PC-9 (cell line): ENCODE measurements at regions of chr3 and their contacts with region 1.

Region 1: DNA sequence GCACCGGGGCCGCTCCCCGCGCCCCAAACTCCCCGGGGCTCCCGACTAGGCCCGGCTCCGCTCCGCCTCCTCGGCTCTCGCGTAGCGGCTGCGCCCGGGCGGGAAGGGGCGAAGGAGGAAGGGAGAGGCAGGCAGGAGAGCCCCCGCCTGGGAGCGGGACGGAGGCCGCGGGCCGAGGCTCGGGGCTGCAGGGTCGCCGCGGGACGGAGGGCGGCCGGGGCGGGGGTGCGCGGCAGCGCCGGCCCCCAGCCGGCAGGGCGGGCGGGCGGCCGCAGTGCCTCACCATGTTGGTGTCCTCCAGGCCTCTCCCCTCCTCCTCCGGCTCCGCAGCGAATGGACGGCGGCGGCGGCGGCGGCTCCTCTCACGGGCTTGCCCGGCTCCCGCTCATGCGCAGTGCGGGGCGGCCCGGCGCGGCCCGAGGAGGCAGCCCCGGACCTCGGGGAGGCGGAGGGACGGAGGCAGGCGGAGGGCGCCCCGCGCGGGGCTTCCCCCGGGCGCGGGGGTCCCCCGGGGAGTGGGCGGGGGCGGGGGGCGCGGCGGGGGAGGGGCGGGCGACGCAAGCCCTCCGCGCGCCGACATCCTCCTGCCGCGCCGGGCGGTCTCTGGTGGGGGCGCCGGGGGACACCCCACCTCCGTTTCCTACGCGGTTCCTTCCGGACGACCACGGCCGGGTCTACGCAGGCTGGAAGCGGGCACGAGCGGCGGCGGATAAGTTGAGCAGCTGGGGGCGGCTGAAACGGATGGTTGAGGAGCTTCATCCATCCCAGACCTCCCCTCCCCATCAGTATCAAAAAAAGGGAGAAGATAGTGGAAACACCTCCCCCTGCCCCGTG is at the start of gene DCUN1D1:
- DNase-seq: peak; percentile 79 to 97
- H3K4me3 ChIP-seq: peak within 1 kb of the TSS; percentile 68
- H3K27ac ChIP-seq: no peak within 1 kb of the TSS
- H3K4me1 ChIP-seq: peaks cover 20% of the 10 kb centered on the region
- H3K27me3 ChIP-seq: no peaks in the 10 kb centered on the region
- CTCF ChIP-seq: no peak
- total RNA-seq, gene DCUN1D1: 80.3 and 93.5 TPM in 2 replicates

Region 2: DNA sequence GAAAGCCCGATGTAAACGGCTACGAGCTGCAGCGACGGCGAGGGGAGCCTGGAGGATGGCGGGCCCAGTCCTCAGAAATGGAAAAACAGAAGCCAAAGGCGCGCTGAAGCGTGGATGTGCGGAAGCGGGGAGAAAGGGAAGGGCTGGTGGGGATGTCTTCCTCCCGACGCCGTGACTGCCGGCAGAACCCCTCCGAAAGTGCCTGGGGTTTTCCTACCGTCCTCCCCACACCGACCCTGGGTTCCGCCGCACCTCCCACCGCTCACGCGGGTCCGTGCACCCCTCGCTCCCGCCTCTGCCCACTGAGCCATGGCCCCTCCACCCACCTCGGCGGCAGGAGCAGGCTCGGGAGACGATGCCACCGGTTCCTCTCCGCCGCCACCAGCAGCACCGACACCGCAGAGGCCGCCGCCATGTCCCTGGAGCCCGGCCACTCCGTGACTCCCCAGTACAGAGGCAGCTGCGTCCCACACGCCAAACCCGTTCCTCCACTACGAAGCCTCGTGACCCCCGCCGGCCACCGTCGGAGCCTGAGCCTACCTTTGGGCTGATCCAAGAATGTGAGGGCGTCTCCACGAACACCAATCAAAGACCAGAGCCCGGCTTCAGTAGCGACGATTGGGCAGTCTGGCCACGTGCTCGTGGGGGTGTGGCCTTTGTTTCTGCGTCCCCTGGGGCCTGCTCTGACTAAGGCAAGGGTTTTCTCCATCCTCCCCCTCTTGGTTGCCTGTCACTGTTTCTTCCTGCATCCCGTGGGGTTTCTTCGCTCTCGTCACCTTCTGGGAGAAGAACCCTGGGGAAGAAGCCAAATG is 118.8 kb after region 1 on chr3 and contains the start of gene MCCC1:
- CTCF ChIA-PET with region 1: no interaction called
- POLR2A ChIA-PET with region 1: no interaction called
- intact Hi-C with region 1: loop called (anchors 1 kb)
- DNase-seq: peak; percentile 100
- H3K4me3 ChIP-seq: peak within 1 kb of the TSS; percentile 86
- H3K27ac ChIP-seq: peak within 1 kb of the TSS; percentile 52
- H3K4me1 ChIP-seq: peaks cover 26% of the 10 kb centered on the region
- H3K27me3 ChIP-seq: no peaks in the 10 kb centered on the region
- CTCF ChIP-seq: no peak
- total RNA-seq, gene MCCC1: 52.6 and 56.8 TPM in 2 replicates